HepG2 (cell line): ENCODE measurements at regions of chr10 and their contacts with region 1.

Region 1: GRCh38 chr10:96586419-96587263 is at the start of gene TM9SF3:
- DNase-seq: peak; percentile 73
- ATAC-seq: peak; percentile 91
- H3K4me3 ChIP-seq: peak within 1 kb of the TSS; percentile 97
- H3K27ac ChIP-seq: peak within 1 kb of the TSS; percentile 99
- H3K4me1 ChIP-seq: peaks cover 48% of the 10 kb centered on the region
- H3K27me3 ChIP-seq: no peaks in the 10 kb centered on the region; a peak in 1 of 5 replicates
- CTCF ChIP-seq: peak; percentile 26; the same call in 1 of the 2 replicates
- EP300 ChIP-seq: no peak
- POLR2A ChIP-seq: peak; percentile 63 to 77
- RAD21 ChIP-seq: peak; percentile 14; the same call in 1 of the 2 replicates
- total RNA-seq, gene TM9SF3: 86.8 and 120 TPM in 2 replicates

Region 2: GRCh38 chr10:96596422-96597407 is 10.1 kb after region 1 on chr10:
- CTCF ChIA-PET with region 1: no interaction called
- POLR2A ChIA-PET with region 1: interaction called, 12 read pairs
- in situ Hi-C with region 1: no loop called
- intact Hi-C with region 1: no loop called
- DNase-seq: peak; percentile 84
- ATAC-seq: peak; percentile 90
- H3K4me3 ChIP-seq: no peak overlapping the region
- H3K27ac ChIP-seq: peak overlapping the region; percentile 32
- H3K4me1 ChIP-seq: peaks cover 29% of the 10 kb centered on the region
- H3K27me3 ChIP-seq: peaks cover 0 to 1% of the 10 kb centered on the region in 2 experiments; a peak in 1 of 5 replicates
- CTCF ChIP-seq: no peak
- EP300 ChIP-seq: peak in 1 of 2 experiments; percentile 89; a peak in 2 of 4 replicates
- POLR2A ChIP-seq: no peak
- RAD21 ChIP-seq: no peak

Region 3: GRCh38 chr10:96613576-96613975 is 26.9 kb after region 1 on chr10:
- CTCF ChIA-PET with region 1: no interaction called
- POLR2A ChIA-PET with region 1: no interaction called
- in situ Hi-C with region 1: no loop called
- intact Hi-C with region 1: loop called (anchors 2 kb)
- DNase-seq: no peak
- ATAC-seq: no peak
- H3K4me3 ChIP-seq: no peak overlapping the region
- H3K27ac ChIP-seq: no peak overlapping the region
- H3K4me1 ChIP-seq: peaks cover 50% of the 10 kb centered on the region
- H3K27me3 ChIP-seq: no peaks in the 10 kb centered on the region
- CTCF ChIP-seq: no peak
- EP300 ChIP-seq: no peak
- POLR2A ChIP-seq: no peak
- RAD21 ChIP-seq: no peak